ENCODE measurements at regions of chr1 and their contacts with region 1.

Region 1: GRCh38 chr1:113677250-113678158 is 81.8 kb downstream of the PHTF1 start:
- DNase-seq: peak; percentile 21 to 58
- ATAC-seq: peak; percentile 83 to 96 (median 92)
- H3K4me3 ChIP-seq: no peak overlapping the region
- H3K27ac ChIP-seq: no peak overlapping the region
- H3K4me1 ChIP-seq: peaks cover 6% of the 10 kb centered on the region
- H3K27me3 ChIP-seq: no peaks in the 10 kb centered on the region
- CTCF ChIP-seq: peak; percentile 63

Region 2: DNA sequence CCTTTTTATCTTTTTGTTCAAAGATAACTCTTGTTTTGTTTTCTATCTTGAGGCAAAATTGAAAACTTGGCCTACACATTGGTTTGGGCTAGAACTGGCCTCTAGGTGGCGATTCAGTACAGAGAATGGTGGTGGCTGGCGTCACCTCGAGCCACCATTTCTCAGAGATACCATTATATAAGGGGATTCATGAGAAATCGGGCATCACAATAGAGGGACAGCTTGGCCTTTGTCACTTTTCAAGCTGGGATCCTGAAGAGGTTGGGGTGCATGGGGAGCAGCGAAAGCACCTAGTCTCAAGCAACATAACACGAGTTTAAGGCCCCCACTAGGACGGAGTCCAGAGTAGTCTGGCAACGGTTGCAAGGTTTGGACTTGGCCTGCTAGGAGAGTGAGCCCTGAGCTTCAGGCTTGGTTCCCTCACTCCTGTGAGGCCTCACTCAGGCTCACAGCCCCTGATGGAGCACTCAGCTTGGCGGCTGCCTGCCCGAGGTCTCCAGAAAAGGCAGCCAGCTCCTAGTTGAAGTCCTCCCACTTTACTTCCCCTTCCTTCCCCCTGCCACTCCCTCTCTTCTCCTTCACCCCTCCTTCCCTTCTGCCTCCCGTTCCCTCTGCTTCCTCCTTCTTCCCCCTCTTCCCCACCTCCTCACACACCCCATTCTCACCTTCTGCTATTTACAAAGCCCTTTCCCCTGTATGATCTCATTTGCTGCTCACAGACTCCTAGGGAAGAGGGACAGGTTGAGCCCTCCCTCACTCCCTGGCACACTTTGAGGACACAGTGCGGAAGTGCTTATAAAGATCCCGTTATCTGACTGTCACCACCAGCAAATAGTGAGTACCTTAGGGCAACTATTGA is 536.7 kb before region 1 on chr1:
- intact Hi-C with region 1: loop called (anchors 1 to 5 kb)
- DNase-seq: peak; percentile 40 to 55
- ATAC-seq: peak; percentile 80 to 95 (median 88)
- H3K4me3 ChIP-seq: peak overlapping the region; percentile 33
- H3K27ac ChIP-seq: no peak overlapping the region
- H3K4me1 ChIP-seq: no peaks in the 10 kb centered on the region
- H3K27me3 ChIP-seq: no peaks in the 10 kb centered on the region
- CTCF ChIP-seq: peak; percentile 82

Region 3: DNA sequence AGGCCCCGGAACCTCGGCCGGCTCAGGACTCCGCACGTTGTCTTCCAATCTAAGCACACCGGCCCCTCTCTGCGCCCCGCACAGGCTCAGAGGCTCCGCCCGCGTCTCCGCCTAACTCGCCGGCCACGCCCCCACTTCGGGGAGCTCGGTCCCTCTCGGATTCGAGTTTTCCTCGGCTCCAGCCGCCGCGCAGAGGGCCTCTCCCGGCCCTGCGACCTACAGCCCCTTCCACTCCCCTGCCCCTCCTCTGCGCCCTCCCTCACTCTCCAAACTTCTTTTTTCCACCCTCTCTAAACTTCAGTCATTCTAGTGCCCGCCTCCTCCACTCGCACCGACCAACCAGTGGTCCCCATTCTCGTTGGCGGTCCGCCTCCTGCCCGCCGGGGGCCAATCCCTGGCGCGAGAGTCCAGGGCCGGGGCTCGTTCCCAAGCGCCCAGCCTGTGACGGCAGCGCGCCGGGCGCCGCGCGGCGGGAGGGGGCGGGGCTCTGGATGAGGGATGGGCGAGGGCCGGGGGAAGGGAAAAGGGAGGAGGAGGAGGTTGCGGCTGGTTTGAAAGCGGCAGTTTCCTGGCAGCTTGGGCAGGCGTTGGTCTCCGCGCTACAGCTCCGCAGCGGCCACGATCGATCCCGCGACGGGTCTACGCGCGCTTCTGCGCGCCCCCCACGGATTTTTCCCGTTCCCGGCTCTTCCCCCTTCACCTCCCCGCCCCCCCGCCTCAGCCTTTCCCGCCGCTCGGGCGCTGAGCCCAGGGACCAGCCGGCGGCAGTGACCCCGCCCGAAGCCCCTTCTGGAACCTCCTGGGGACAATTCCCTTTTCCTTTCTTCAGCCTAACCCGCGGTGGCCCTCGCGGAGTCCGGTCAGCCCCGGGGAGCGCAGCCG is 287.3 kb before region 1 on chr1 and contains the start of gene MAGI3:
- intact Hi-C with region 1: loop called in 1 of 2 experiments (anchors 10 kb)
- DNase-seq: peak; percentile 98
- ATAC-seq: peak; percentile 97 to 99 (median 98)
- H3K4me3 ChIP-seq: peak within 1 kb of the TSS; percentile 87
- H3K27ac ChIP-seq: peak within 1 kb of the TSS; percentile 73
- H3K4me1 ChIP-seq: peaks cover 10% of the 10 kb centered on the region
- H3K27me3 ChIP-seq: no peaks in the 10 kb centered on the region
- CTCF ChIP-seq: no peak
- total RNA-seq, gene MAGI3: 2.9 to 7.1 (median 4.4) TPM